Panc1 (cell line): ENCODE measurements at regions of chr1 and their contacts with region 1.

Region 1: GRCh38 chr1:178093205-178093957 is 523 bp upstream of the RASAL2 start:
- DNase-seq: peak; percentile 83
- ATAC-seq: peak; percentile 92
- H3K4me3 ChIP-seq: peak overlapping the region; percentile 80 to 94
- H3K27ac ChIP-seq: peak overlapping the region; percentile 91
- H3K4me1 ChIP-seq: peaks cover 31% of the 10 kb centered on the region
- H3K27me3 ChIP-seq: no peaks in the 10 kb centered on the region
- CTCF ChIP-seq: no peak

Region 2: DNA sequence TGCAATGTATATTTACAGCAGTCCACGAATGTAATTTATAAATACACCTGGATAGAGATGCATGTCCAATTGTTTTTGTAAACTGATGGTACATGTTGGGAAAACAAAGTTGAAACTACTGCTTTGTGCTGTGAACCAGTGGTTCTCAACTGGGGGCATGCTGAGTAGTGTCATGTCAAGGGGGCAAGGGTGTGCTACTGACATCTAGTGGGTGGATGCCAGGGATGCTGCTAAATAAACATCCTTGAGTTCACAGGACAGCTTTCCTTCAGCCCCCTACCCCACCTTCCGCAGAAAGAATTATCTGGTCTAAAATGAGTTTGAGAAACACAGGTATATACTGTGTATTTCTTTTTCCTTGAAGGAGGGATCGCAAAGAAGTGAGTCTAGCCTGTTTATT is 96.4 kb after region 1 on chr1:
- CTCF ChIA-PET with region 1: no interaction called
- POLR2A ChIA-PET with region 1: no interaction called
- in situ Hi-C with region 1: no loop called
- intact Hi-C with region 1: loop called (anchors 5 kb)
- DNase-seq: no peak
- ATAC-seq: peak; percentile 77
- H3K4me3 ChIP-seq: no peak overlapping the region
- H3K27ac ChIP-seq: no peak overlapping the region
- H3K4me1 ChIP-seq: peaks cover 15% of the 10 kb centered on the region; the same call in 1 of the 2 replicates
- H3K27me3 ChIP-seq: no peaks in the 10 kb centered on the region
- CTCF ChIP-seq: peak; percentile 77